Pancreas (tissue), 10 donors: ENCODE measurements at regions of chr6 and their contacts with region 1.

Region 1: GRCh38 chr6:30926644-30927043 is 5.3 kb downstream of the SFTA2 start:
- DNase-seq: peak in 3 of 6 donors; percentile 45 to 68 (median 48)
- ATAC-seq: peak; percentile 68 to 90 (median 82)
- H3K4me3 ChIP-seq: no peak overlapping the region
- H3K27ac ChIP-seq: peak overlapping the region in 3 of 4 donors; percentile 6 to 39 (median 22)
- H3K4me1 ChIP-seq: no peaks in the 10 kb centered on the region
- H3K27me3 ChIP-seq: no peaks in the 10 kb centered on the region
- CTCF ChIP-seq: no peak

Region 2: DNA sequence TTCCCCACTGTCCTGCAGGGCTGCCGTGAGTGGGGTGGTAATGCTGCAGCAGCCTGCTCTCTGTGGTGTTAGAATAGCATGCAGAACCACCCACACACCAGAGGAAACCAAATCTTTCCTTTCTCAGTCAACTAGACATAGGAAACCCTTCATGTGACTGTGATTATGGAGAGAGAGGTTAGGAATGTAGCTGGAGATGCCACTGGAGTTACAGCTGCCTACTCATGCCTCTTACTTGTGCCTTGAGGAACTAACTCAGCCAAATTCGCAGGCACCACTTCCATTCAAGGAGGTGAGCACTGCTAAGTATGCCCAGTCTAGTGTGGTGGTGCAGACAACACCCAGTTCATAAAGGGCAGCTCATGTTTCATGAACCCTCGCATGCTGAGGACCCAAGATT is 111.0 kb after region 1 on chr6:
- intact Hi-C with region 1: loop called in 2 of 3 experiments (anchors 10 kb)
- DNase-seq: no peak
- ATAC-seq: no peak
- H3K4me3 ChIP-seq: no peak overlapping the region
- H3K27ac ChIP-seq: no peak overlapping the region
- H3K4me1 ChIP-seq: peaks cover 0 to 10% (median 5%) of the 10 kb centered on the region in 3 donors
- H3K27me3 ChIP-seq: no peaks in the 10 kb centered on the region
- CTCF ChIP-seq: no peak

Region 3: DNA sequence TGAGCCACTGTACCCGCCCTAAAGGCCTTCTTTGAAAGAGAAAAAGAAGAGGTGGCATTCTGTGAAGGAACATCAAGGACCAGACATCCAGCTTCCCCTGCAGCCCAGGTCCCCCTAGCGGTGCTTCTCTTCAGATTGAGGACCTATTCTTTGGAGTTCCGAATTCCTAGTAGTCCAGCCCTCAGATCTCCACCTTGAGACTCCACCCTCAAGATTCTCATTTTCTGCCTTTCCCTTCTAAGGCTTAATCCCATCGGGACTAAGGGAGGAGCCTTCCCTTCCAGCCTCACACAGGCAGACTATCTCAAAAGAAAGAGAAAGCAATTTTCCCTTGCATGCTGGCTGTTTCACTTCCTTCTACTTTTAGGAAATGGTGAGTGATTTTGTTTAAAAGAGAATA is 116.2 kb after region 1 on chr6:
- intact Hi-C with region 1: loop called in 2 of 3 experiments (anchors 10 kb)
- DNase-seq: peak in 2 of 6 donors; percentile 44 to 59
- ATAC-seq: peak in 3 of 4 donors; percentile 72 to 86 (median 76)
- H3K4me3 ChIP-seq: no peak overlapping the region
- H3K27ac ChIP-seq: peak overlapping the region in 1 of 4 donors; percentile 77
- H3K4me1 ChIP-seq: peaks cover 0 to 3% (median 0%) of the 10 kb centered on the region in 3 donors
- H3K27me3 ChIP-seq: no peaks in the 10 kb centered on the region
- CTCF ChIP-seq: peak in 2 of 4 donors; percentile 27 to 30

Region 4: DNA sequence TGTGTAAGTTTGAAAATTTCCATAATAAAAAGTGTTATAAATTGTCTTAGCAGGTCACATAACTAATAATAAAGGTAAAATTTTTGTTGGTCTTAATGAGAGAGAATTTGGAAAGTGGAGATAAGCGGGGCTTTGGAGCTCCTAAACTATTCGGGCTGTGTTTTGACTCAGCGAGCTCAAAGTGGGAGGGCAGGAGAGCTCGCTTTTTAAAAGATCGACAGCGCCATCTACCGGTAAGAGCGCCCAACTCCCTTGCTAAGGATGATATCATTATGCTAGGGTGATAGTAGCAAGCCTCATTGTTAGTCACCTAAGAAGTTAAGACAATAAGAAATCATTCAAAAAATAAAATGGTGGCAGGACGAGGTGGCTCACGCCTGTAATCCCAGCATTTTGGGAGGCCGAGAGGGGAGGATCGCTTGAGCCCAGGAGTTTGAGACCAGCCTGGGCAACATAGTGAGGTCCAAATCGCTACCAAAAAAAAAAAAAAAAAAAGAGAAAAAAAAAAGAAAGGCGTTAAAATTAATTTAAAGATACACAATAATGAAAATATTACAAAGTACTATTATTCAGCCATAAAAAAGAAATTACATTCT is 160.9 kb after region 1 on chr6:
- intact Hi-C with region 1: loop called in 1 of 3 experiments (anchors 10 kb)
- DNase-seq: peak; percentile 64 to 94 (median 82)
- ATAC-seq: peak; percentile 97 to 99 (median 98)
- H3K4me3 ChIP-seq: no peak overlapping the region
- H3K27ac ChIP-seq: no peak overlapping the region
- H3K4me1 ChIP-seq: no peaks in the 10 kb centered on the region
- H3K27me3 ChIP-seq: no peaks in the 10 kb centered on the region
- CTCF ChIP-seq: peak; percentile 61 to 76 (median 74)